Activated B cell treated with CpG ODN at 0.5 μM for 24 hours (primary cell): ENCODE measurements at regions of chr2 and their contacts with region 1.

Region 1: DNA sequence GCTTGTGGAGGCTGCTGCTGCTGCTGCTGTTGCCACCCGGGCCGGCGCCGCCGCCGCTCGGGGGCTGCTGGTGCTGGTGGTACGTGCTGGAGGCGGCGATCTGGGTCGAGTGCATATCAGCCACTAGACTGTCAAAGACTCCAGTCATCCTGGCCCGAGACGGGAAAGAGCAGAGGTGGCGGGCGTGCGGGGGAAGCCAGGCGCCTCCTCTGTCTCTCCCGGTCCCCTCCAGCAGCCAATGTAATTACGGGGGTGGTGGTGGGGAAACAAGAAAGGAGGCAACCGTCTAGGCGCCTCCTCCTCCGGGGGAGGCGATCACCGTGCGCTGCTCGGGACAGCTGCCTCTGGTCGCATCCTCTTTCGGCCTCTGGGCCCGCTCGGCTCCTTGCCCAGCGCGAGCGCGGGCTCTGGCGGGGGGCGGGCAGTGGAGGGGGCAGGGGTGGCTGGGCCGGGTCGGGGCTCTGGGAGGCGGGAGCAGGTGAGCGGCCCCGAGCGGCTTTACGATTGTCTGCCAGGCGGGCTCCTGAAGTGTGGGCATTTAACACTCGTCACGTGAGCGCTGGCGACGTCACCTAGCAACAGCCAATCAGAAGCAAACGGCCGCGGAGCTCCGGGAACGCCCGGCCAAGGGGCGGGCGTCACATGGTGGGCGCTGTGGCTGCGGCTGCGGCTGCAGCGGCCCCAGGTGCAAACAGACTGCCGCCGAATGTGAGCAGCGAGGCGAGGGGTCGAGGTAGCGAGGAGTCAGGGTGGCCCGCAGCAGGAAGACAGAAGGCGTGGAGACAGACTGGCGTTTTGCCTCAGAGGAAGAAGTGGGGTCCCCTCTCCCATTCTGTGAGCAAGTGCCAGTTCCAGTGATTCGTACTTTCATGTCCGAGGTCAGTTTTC is at the start of gene DLX2:
- DNase-seq: peak; percentile 53
- ATAC-seq: peak; percentile 68
- H3K4me3 Mint-ChIP-seq: peak within 1 kb of the TSS; percentile 80
- H3K27ac Mint-ChIP-seq: peak within 1 kb of the TSS; percentile 61
- H3K4me1 Mint-ChIP-seq: peaks cover 39% of the 10 kb centered on the region
- H3K27me3 Mint-ChIP-seq: peaks cover 56% of the 10 kb centered on the region
- CTCF ChIP-seq: no peak
- total RNA-seq, gene DLX2: 0.16 TPM in 1 of 2 replicates, not detected in the other

Region 2: GRCh38 chr2:170928824-170929685 is 1173.6 kb before region 1 on chr2 and contains the start of gene GORASP2:
- CTCF ChIA-PET with region 1: no interaction called
- POLR2A ChIA-PET with region 1: no interaction called
- intact Hi-C with region 1: loop called (anchors 5 kb)
- DNase-seq: peak; percentile 96
- ATAC-seq: peak; percentile 93
- H3K4me3 Mint-ChIP-seq: peak within 1 kb of the TSS; percentile 90
- H3K27ac Mint-ChIP-seq: peak within 1 kb of the TSS; percentile 88
- H3K4me1 Mint-ChIP-seq: peaks cover 38% of the 10 kb centered on the region
- H3K27me3 Mint-ChIP-seq: no peaks in the 10 kb centered on the region
- CTCF ChIP-seq: peak; percentile 75
- total RNA-seq, gene GORASP2: 60.7 and 69.7 TPM in 2 replicates

Region 3: GRCh38 chr2:171687287-171688128 is 415.1 kb before region 1 on chr2 and contains the start of gene DYNC1I2:
- CTCF ChIA-PET with region 1: no interaction called
- POLR2A ChIA-PET with region 1: no interaction called
- intact Hi-C with region 1: loop called (anchors 5 kb)
- DNase-seq: peak; percentile 70
- ATAC-seq: peak; percentile 87
- H3K4me3 Mint-ChIP-seq: peak within 1 kb of the TSS; percentile 95
- H3K27ac Mint-ChIP-seq: peak within 1 kb of the TSS; percentile 88
- H3K4me1 Mint-ChIP-seq: peaks cover 17% of the 10 kb centered on the region
- H3K27me3 Mint-ChIP-seq: peaks cover 2% of the 10 kb centered on the region
- CTCF ChIP-seq: no peak
- total RNA-seq, gene DYNC1I2: 52.0 and 54.6 TPM in 2 replicates

Region 4: DNA sequence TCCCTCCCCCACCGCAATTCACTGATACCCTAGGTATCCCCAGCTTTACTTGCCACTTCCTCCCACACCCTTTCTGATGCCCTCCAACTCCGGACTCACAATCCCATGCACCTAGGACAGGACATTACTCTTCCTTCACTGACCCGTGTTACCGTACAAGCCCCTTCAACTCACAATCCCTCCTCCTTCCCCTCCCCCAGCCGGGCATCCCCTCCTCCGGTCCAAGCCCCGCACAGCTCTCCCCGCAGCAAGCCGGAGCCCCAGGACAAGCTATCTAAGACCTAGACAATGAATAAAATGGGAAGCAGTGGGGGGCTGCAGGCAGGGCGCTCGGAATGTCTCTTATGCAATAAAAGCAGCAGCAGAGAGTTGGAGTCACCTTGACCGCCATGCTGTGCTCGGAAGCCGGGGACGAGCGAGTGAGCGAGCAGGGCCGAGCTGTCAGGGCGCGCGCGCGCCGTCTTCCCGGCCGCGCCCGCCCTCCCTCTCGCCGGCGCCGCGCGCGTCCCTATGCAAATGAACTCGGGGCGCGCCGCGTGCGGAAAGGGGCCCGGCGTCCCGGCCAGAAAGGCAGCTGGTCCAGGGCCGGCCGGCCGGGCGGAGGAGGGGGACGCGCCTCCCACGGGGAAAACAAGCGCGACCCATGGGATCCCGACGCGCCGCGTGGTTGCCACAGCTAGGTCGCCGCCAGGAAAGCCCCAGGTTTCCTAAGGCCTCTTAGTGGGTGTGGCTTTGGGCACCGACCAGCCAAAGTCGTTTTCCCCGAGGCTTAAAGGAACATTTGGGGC is 208.6 kb before region 1 on chr2 and contains the start of gene SLC25A12:
- CTCF ChIA-PET with region 1: no interaction called
- POLR2A ChIA-PET with region 1: interaction called, 4 read pairs
- intact Hi-C with region 1: loop called (anchors 2 kb)
- DNase-seq: peak; percentile 81
- ATAC-seq: peak; percentile 95
- H3K4me3 Mint-ChIP-seq: peak within 1 kb of the TSS; percentile 98
- H3K27ac Mint-ChIP-seq: peak within 1 kb of the TSS; percentile 85
- H3K4me1 Mint-ChIP-seq: peaks cover 23% of the 10 kb centered on the region
- H3K27me3 Mint-ChIP-seq: no peaks in the 10 kb centered on the region
- CTCF ChIP-seq: no peak
- total RNA-seq, gene SLC25A12: 18.8 and 22.2 TPM in 2 replicates

Region 5: GRCh38 chr2:172072303-172072702 is 30.3 kb before region 1 on chr2:
- CTCF ChIA-PET with region 1: no interaction called
- POLR2A ChIA-PET with region 1: no interaction called
- intact Hi-C with region 1: loop called (anchors 5 kb)
- DNase-seq: no peak
- ATAC-seq: no peak
- H3K4me3 Mint-ChIP-seq: no peak overlapping the region
- H3K27ac Mint-ChIP-seq: no peak overlapping the region
- H3K4me1 Mint-ChIP-seq: no peaks in the 10 kb centered on the region
- H3K27me3 Mint-ChIP-seq: peaks cover 3% of the 10 kb centered on the region
- CTCF ChIP-seq: no peak

Region 6: DNA sequence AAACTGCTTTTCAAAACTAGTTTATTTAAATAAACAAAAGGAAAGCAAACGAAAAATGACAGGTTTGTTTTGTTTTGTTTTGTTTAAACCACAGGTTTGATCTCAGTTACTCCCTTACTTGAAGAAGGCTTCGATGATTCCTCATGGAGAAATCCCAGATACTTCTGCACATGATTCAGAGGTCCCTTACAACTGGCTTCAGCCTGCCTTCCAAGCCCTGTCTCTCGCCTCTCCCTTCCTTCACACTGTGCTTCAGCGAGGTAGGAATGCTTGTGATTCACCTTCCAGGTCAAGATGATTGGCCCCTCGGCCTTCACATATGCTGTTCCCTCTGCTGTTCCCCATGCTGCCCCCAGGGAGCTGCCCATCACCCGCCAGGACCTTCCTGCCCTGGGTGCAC is 220.6 kb after region 1 on chr2:
- CTCF ChIA-PET with region 1: no interaction called
- POLR2A ChIA-PET with region 1: no interaction called
- intact Hi-C with region 1: no loop called
- DNase-seq: no peak
- ATAC-seq: no peak
- H3K4me3 Mint-ChIP-seq: no peak overlapping the region
- H3K27ac Mint-ChIP-seq: no peak overlapping the region
- H3K4me1 Mint-ChIP-seq: no peaks in the 10 kb centered on the region
- H3K27me3 Mint-ChIP-seq: peaks cover 3% of the 10 kb centered on the region
- CTCF ChIP-seq: no peak